ENCODE measurements at regions of chr13 and their contacts with region 1.

Region 1: DNA sequence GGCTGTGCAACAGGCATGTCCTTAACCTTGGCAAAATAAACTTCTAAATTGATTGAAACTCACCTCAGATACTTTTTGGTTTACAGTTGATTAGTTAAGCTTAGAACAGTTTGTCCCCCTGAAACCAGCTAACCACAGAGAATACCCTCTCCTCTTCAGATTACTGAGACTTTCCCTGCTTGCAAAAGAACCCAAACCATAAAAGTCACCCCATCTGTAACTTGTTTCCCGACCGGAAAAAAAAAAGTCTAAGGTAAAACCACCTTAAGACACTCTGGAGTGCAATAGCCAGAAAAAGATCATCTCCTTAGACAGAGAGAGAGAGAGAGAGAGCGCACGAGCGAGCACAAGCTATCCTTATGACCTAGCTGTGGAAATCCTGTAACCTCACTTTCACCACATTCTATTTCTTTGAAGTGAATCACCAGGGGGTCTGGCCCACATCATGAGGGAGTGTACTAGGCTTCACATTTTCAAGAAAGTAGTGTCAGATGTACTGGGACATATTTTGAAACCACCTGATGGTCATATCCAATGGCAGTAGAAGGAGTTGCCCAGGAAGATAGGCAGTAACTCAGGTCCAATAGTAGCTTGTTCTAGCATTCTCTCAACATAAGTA is 11.1 kb upstream of the GTF2F2 start:
- DNase-seq: peak in 1 of 35 experiments; percentile 1
- ATAC-seq: no peak
- H3K4me3 ChIP-seq: no peak overlapping the region
- H3K4me3 Mint-ChIP-seq: no peak overlapping the region
- H3K27ac ChIP-seq: no peak overlapping the region
- H3K27ac Mint-ChIP-seq: peak overlapping the region in 1 of 2 donors; percentile 27
- H3K4me1 ChIP-seq: no peaks in the 10 kb centered on the region
- H3K4me1 Mint-ChIP-seq: peaks cover 0 to 4% (median 3%) of the 10 kb centered on the region in 3 donors
- H3K27me3 ChIP-seq: peaks cover 0 to 12% of the 10 kb centered on the region in 2 experiments
- H3K27me3 Mint-ChIP-seq: peaks cover 6 to 12% of the 10 kb centered on the region in 2 donors

Region 2: DNA sequence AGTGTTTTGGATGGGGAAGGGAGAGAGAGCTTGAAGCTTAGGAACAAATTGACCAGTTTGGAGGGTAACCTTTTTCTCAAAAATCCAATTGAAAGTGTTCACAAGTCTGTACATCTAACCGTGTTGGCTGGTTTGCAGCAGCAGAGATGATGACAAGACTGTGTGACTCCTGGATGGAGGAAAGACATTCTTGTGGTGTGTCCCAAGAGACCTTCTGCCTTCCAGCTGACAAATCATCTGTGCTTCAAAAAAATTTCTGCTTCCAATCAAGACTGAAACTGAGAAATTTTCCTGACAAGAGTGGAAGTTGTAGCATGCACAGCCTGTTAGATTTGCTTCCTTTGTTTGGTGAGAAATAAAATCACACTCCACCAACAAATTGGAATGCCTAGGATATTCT is 1173.3 kb before region 1 on chr13:
- CTCF ChIA-PET with region 1: interaction called in 1 of 2 experiments, 11 read pairs
- POLR2A ChIA-PET with region 1: no interaction called
- DNase-seq: no peak
- ATAC-seq: no peak
- H3K4me3 ChIP-seq: no peak overlapping the region
- H3K4me3 Mint-ChIP-seq: no peak overlapping the region
- H3K27ac ChIP-seq: no peak overlapping the region
- H3K27ac Mint-ChIP-seq: no peak overlapping the region
- H3K4me1 ChIP-seq: no peaks in the 10 kb centered on the region
- H3K4me1 Mint-ChIP-seq: no peaks in the 10 kb centered on the region
- H3K27me3 ChIP-seq: no peaks in the 10 kb centered on the region
- H3K27me3 Mint-ChIP-seq: no peaks in the 10 kb centered on the region

Region 3: GRCh38 chr13:45162821-45163220 is 53.6 kb after region 1 on chr13:
- CTCF ChIA-PET with region 1: no interaction called
- POLR2A ChIA-PET with region 1: no interaction called
- DNase-seq: no peak
- ATAC-seq: no peak
- H3K4me3 ChIP-seq: no peak overlapping the region
- H3K4me3 Mint-ChIP-seq: no peak overlapping the region
- H3K27ac ChIP-seq: no peak overlapping the region
- H3K27ac Mint-ChIP-seq: no peak overlapping the region
- H3K4me1 ChIP-seq: no peaks in the 10 kb centered on the region
- H3K4me1 Mint-ChIP-seq: no peaks in the 10 kb centered on the region
- H3K27me3 ChIP-seq: no peaks in the 10 kb centered on the region
- H3K27me3 Mint-ChIP-seq: no peaks in the 10 kb centered on the region

Region 4: DNA sequence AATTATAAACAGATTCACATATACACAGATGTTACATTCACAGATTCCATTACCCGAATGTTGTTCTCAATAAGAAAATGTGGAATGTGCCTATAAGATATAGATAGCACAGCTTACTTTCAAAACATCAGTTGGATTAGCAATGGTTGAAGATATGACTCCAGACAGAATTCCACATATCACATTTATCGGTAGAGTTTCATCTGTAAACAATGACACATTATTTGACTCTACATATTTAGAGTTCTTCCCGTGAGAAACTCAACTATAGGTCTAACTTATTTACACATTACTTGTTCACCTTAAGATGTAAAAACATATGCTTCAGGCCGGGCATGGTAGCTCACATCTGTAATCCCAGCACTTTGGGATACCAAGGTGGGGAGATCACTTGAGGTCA is 295.0 kb after region 1 on chr13:
- CTCF ChIA-PET with region 1: no interaction called
- POLR2A ChIA-PET with region 1: interaction called in 1 of 2 experiments, 11 read pairs
- DNase-seq: no peak
- ATAC-seq: no peak
- H3K4me3 ChIP-seq: no peak overlapping the region
- H3K4me3 Mint-ChIP-seq: no peak overlapping the region
- H3K27ac ChIP-seq: no peak overlapping the region
- H3K27ac Mint-ChIP-seq: no peak overlapping the region
- H3K4me1 ChIP-seq: peaks cover 0 to 2% of the 10 kb centered on the region in 2 experiments
- H3K4me1 Mint-ChIP-seq: peaks cover 11 to 20% (median 14%) of the 10 kb centered on the region in 3 donors
- H3K27me3 ChIP-seq: no peaks in the 10 kb centered on the region
- H3K27me3 Mint-ChIP-seq: no peaks in the 10 kb centered on the region